ENCODE measurements at regions of chr2 and their contacts with region 1.

Region 1: GRCh38 chr2:67476809-67477790 is 80.0 kb downstream of the ETAA1 start:
- DNase-seq: peak in 1 of 2 experiments; percentile 50
- H3K4me3 ChIP-seq: no peak overlapping the region
- H3K27ac ChIP-seq: no peak overlapping the region
- H3K4me1 ChIP-seq: no peaks in the 10 kb centered on the region
- H3K27me3 ChIP-seq: no peaks in the 10 kb centered on the region
- CTCF ChIP-seq: peak; percentile 84

Region 2: GRCh38 chr2:67237288-67237687 is 239.8 kb before region 1 on chr2:
- CTCF ChIA-PET with region 1: no interaction called
- POLR2A ChIA-PET with region 1: no interaction called
- intact Hi-C with region 1: loop called (anchors 5 kb)
- DNase-seq: no peak
- H3K4me3 ChIP-seq: no peak overlapping the region
- H3K27ac ChIP-seq: no peak overlapping the region
- H3K4me1 ChIP-seq: no peaks in the 10 kb centered on the region
- H3K27me3 ChIP-seq: no peaks in the 10 kb centered on the region
- CTCF ChIP-seq: 0 out of 2 replicates have a peak, but pooled peaks have one; percentile 22

Region 3: DNA sequence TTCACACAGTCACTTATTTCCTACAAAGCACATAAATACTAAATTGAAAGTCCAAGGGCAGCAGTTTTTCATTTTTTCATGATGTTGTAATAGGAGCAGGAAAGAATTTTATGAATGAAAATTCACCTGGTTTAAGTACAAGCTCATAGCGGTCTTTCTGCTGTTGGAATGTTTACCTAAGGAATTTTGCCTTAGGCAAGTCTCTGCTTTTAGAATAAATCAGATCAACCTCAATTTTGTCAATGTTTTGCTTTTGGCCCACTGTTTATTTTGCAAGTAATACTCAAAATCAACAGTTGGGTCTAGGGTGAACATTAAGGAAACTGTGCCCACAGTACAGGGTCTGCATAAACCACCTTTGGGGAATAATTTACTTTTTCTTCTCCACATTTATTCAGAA is 39.9 kb before region 1 on chr2:
- CTCF ChIA-PET with region 1: no interaction called
- POLR2A ChIA-PET with region 1: no interaction called
- intact Hi-C with region 1: loop called (anchors 1 kb)
- DNase-seq: peak in 1 of 2 experiments; percentile 91
- H3K4me3 ChIP-seq: no peak overlapping the region
- H3K27ac ChIP-seq: no peak overlapping the region
- H3K4me1 ChIP-seq: peaks cover 16% of the 10 kb centered on the region
- H3K27me3 ChIP-seq: no peaks in the 10 kb centered on the region
- CTCF ChIP-seq: no peak

Region 4: GRCh38 chr2:67489396-67489795 is 12.3 kb after region 1 on chr2:
- CTCF ChIA-PET with region 1: no interaction called
- POLR2A ChIA-PET with region 1: no interaction called
- intact Hi-C with region 1: no loop called
- DNase-seq: no peak
- H3K4me3 ChIP-seq: no peak overlapping the region
- H3K27ac ChIP-seq: no peak overlapping the region
- H3K4me1 ChIP-seq: no peaks in the 10 kb centered on the region
- H3K27me3 ChIP-seq: no peaks in the 10 kb centered on the region
- CTCF ChIP-seq: no peak

Measured in PC-9 (cell line).